ENCODE measurements at regions of chr10 and their contacts with region 1.

Region 1: DNA sequence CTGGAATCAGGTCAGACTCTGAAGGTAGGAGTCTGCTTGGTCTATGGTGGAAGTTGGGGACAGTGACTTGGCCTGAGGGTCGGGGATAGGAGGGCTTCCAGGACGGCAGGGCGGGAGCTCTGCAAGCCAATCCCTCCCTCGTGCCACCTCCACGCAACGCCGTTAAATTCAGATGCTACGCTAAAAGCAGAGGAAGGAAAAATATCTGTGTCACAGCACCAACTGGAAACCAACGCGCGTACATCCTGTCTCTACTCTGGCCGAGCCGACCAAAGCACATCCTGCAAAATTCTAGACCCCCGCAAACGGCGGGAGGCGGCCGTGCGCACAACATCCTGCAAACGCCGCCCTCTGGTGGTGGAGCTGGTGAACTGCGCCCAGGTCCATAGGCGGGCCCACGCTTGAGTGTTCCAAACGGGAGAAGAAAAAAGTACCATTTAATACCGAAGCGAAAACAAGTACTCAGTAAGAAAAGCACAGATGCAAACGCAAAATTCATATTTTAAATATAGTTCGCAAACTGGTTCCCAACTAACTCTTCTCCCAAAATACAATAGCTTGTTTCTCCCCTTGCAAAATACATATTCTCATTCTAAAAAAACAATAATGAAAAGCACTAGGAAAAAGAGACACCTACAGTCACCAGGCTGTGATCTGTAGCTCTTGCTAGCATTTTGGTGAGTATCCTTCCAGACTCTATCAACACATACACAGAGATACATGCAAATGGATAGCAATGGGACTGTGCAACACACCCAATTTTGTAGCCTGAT is 45.7 kb upstream of the HSPA12A start:
- DNase-seq: peak; percentile 61
- H3K4me3 Mint-ChIP-seq: peak overlapping the region; percentile 47
- H3K27ac Mint-ChIP-seq: peak overlapping the region; percentile 52
- H3K4me1 Mint-ChIP-seq: peaks cover 17% of the 10 kb centered on the region
- H3K27me3 Mint-ChIP-seq: peaks cover 11% of the 10 kb centered on the region

Region 2: DNA sequence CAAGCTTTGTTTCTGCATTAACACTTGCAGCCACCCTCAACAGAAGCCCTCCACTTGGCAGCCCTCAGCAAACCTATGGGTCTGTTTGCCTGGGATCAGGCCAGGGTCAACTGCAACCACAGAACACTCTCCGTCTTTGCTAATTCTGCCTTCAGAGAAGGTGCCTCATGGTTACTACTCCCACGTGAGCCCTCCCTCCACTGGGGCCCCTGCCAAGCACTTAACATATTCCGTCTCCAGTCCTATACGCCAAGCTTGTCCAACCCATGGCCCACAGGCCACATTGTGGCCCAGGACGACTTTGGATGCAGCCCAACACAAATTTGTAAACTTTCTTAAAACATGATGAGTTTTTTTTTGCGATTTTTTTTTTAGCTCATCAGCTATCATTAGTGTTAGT is 100.4 kb before region 1 on chr10:
- intact Hi-C with region 1: loop called (anchors 1 kb)
- DNase-seq: no peak
- H3K4me3 Mint-ChIP-seq: no peak overlapping the region
- H3K27ac Mint-ChIP-seq: no peak overlapping the region
- H3K4me1 Mint-ChIP-seq: no peaks in the 10 kb centered on the region
- H3K27me3 Mint-ChIP-seq: no peaks in the 10 kb centered on the region

Region 3: GRCh38 chr10:116742367-116743265 is 45.5 kb before region 1 on chr10 and contains the start of gene HSPA12A:
- intact Hi-C with region 1: loop called (anchors 1 kb)
- DNase-seq: peak; percentile 31
- H3K4me3 Mint-ChIP-seq: peak within 1 kb of the TSS; percentile 63
- H3K27ac Mint-ChIP-seq: no peak within 1 kb of the TSS
- H3K4me1 Mint-ChIP-seq: no peaks in the 10 kb centered on the region
- H3K27me3 Mint-ChIP-seq: peaks cover 57% of the 10 kb centered on the region
- total RNA-seq, gene HSPA12A: 0.05 TPM in 1 of 2 replicates, not detected in the other

Region 4: DNA sequence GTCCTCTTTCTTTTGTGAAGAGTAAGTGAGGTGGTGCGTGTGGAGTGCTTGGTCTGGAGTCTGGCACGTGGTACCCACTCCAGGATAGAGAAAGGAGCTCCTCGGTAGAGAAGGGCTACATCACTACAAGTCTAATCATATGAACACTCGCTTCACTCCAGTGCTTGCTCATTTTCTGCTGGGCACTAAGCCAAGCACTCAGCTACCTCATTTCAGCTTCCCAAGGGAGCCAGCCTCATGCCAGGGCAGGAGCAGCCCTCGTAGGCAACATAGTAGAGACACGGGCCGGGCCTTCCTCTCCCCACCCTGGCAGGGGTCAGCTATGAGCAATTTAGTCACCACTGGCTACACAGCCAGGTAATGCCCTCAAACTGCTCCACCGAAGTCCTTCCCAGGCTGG is 34.3 kb before region 1 on chr10:
- intact Hi-C with region 1: no loop called
- DNase-seq: no peak
- H3K4me3 Mint-ChIP-seq: no peak overlapping the region
- H3K27ac Mint-ChIP-seq: no peak overlapping the region
- H3K4me1 Mint-ChIP-seq: no peaks in the 10 kb centered on the region
- H3K27me3 Mint-ChIP-seq: peaks cover 7% of the 10 kb centered on the region

Region 5: DNA sequence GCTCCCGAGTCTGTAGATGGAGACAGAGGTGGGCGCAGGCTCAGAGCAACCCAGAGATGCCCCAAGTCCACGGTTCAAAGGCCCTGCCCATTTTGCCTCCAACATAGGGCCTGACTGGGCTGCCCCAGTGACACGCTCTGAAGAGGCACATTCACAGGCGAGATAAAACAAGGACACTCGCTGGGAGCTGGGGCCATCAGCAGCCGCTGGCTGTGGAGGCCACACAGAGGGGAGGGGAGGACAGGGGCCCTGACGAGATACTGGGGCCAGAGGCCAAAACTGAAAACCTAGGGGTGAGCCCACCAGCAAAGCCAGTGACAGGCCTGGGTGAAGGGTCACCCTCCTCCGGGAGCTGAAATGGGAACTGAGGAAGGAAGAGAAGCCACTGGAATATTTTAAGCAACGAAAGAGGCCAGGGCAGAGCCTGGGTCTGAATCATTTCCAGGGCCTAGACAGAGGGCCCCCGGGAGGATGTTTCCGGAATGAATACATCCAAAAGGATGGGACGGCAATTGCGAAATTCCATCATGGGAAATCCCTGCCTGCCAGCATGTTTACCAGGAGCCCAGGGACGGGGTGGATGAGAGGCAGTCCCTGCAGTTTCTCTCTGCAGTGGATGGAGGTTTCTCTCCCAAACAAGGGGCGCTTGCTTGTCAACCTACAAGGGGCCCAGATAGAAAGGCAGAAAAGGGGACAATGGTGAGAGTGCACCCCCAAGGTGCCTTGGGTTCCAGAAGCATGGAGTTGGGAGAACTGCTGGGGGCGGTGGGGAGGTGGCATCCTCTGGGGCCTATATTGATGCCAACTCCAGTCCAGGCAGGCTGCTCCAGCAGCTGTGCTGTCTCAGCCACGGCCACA is 16.7 kb before region 1 on chr10:
- intact Hi-C with region 1: no loop called
- DNase-seq: no peak
- H3K4me3 Mint-ChIP-seq: no peak overlapping the region
- H3K27ac Mint-ChIP-seq: no peak overlapping the region
- H3K4me1 Mint-ChIP-seq: no peaks in the 10 kb centered on the region
- H3K27me3 Mint-ChIP-seq: no peaks in the 10 kb centered on the region

Region 6: DNA sequence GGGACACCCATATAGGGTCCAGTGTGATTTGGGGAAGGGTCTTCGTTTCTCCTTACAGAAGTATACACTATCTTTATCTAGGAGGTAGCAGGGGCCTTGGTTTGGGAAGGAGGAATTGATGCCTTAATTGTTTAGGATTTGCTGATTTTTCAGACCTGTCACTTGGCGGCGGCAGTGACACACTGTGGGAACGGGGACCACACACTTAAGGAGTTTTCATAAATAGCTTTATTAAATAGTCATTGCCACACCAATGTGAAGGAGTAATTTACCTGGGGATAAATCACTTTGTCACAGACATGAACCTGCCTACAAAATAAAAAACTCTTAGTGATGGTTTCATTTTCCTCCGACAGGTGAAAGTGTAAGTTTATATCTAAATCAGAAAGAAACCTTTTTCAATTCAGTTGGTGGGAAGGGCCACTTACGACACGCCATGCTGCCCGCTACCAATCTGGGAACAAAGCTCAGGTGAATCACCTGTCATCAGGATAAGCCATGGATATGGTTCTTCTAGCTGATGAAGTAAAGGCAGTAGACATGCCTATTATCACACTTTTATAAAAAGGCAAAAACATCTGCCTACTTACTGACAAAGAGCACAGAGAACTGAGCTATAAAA is 48.9 kb after region 1 on chr10:
- intact Hi-C with region 1: no loop called
- DNase-seq: no peak
- H3K4me3 Mint-ChIP-seq: no peak overlapping the region
- H3K27ac Mint-ChIP-seq: no peak overlapping the region
- H3K4me1 Mint-ChIP-seq: no peaks in the 10 kb centered on the region
- H3K27me3 Mint-ChIP-seq: peaks cover 9% of the 10 kb centered on the region